ENCODE measurements at regions of chr1 and their contacts with region 1.

Region 1: GRCh38 chr1:29793101-29793546 is 556.8 kb downstream of the PTPRU start:
- DNase-seq: peak; percentile 61
- H3K4me3 Mint-ChIP-seq: no peak overlapping the region
- H3K27ac Mint-ChIP-seq: no peak overlapping the region
- H3K4me1 Mint-ChIP-seq: no peaks in the 10 kb centered on the region
- H3K27me3 Mint-ChIP-seq: peaks cover 1% of the 10 kb centered on the region

Region 2: DNA sequence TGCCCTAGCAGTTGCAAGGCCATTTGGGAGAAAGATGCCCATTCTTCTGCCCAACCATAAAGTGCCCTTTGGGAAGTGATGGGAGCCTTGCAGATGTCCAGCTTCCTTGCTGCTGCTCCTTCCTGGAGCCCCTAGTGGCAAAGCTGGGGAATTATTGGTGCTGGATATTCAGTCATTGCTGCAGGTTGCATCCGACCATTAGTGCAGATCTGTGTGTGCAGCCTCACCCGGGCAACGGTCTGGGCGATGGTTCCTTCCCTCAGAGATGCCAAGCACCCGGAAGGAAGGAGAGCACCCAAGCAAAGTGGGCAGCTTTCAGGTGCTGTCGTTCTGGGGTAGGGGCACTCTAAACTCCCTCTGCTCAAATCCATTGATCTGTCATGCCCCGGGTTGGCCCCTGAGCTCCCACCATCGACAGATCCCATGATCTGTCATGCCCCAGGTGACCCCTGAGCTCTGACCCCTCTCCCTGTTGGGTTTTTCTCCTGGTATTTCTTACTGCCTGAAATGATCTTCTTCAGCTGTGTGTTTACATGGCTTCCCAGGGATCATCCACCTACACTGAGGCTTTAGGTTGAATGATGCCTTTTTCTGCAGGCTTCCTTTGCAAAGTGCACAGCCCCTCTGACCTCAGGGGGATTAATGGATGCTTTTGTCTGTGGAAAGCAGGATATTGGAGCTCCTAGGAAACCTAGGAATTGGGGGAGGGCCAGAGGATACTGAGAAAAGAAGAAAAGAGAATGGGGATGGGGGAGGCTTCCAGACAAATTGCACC is 89.3 kb before region 1 on chr1:
- intact Hi-C with region 1: loop called (anchors 1 kb)
- DNase-seq: no peak
- H3K4me3 Mint-ChIP-seq: no peak overlapping the region
- H3K27ac Mint-ChIP-seq: no peak overlapping the region
- H3K4me1 Mint-ChIP-seq: peaks cover 11% of the 10 kb centered on the region
- H3K27me3 Mint-ChIP-seq: peaks cover 20% of the 10 kb centered on the region

Region 3: DNA sequence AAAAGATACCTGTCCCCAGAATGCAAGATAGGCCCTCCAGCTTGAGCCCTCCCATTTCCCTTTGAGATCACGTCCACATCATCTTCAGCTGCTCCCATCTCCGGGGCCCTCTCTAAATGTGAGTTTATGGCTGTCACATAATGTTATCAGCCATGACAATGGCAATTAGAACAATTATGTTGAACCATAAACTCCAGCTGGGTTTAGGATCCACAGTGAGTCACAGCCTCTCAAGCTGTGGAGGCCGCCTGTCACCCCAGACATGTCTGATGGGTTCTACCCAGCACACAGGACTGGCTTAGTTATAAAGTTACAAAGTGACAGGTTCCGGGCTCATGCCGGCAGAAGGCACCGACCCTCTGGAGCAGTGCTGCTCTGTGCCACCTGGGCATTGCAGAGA is 40.5 kb after region 1 on chr1:
- intact Hi-C with region 1: no loop called
- DNase-seq: no peak
- H3K4me3 Mint-ChIP-seq: no peak overlapping the region
- H3K27ac Mint-ChIP-seq: no peak overlapping the region
- H3K4me1 Mint-ChIP-seq: no peaks in the 10 kb centered on the region
- H3K27me3 Mint-ChIP-seq: peaks cover 12% of the 10 kb centered on the region

Region 4: GRCh38 chr1:29849038-29849750 is 56.1 kb after region 1 on chr1:
- intact Hi-C with region 1: loop called (anchors 1 kb)
- DNase-seq: peak; percentile 36
- H3K4me3 Mint-ChIP-seq: no peak overlapping the region
- H3K27ac Mint-ChIP-seq: no peak overlapping the region
- H3K4me1 Mint-ChIP-seq: peaks cover 7% of the 10 kb centered on the region
- H3K27me3 Mint-ChIP-seq: no peaks in the 10 kb centered on the region

Region 5: GRCh38 chr1:30085811-30086770 is 293.0 kb after region 1 on chr1:
- intact Hi-C with region 1: loop called (anchors 10 kb)
- DNase-seq: peak; percentile 5
- H3K4me3 Mint-ChIP-seq: no peak overlapping the region
- H3K27ac Mint-ChIP-seq: no peak overlapping the region
- H3K4me1 Mint-ChIP-seq: no peaks in the 10 kb centered on the region
- H3K27me3 Mint-ChIP-seq: peaks cover 9% of the 10 kb centered on the region

Region 6: GRCh38 chr1:30232288-30232899 is 439.3 kb after region 1 on chr1:
- intact Hi-C with region 1: loop called (anchors 2 kb)
- DNase-seq: peak; percentile 6
- H3K4me3 Mint-ChIP-seq: no peak overlapping the region
- H3K27ac Mint-ChIP-seq: no peak overlapping the region
- H3K4me1 Mint-ChIP-seq: no peaks in the 10 kb centered on the region
- H3K27me3 Mint-ChIP-seq: peaks cover 5% of the 10 kb centered on the region